ENCODE measurements at regions of chr5 and their contacts with region 1.

Region 1: GRCh38 chr5:127770272-127770671 is 67.1 kb downstream of the CCDC192 start:
- DNase-seq: no peak
- H3K4me3 Mint-ChIP-seq: no peak overlapping the region
- H3K27ac Mint-ChIP-seq: no peak overlapping the region
- H3K4me1 Mint-ChIP-seq: no peaks in the 10 kb centered on the region
- H3K27me3 Mint-ChIP-seq: peaks cover 25% of the 10 kb centered on the region
- CTCF ChIP-seq: no peak

Region 2: DNA sequence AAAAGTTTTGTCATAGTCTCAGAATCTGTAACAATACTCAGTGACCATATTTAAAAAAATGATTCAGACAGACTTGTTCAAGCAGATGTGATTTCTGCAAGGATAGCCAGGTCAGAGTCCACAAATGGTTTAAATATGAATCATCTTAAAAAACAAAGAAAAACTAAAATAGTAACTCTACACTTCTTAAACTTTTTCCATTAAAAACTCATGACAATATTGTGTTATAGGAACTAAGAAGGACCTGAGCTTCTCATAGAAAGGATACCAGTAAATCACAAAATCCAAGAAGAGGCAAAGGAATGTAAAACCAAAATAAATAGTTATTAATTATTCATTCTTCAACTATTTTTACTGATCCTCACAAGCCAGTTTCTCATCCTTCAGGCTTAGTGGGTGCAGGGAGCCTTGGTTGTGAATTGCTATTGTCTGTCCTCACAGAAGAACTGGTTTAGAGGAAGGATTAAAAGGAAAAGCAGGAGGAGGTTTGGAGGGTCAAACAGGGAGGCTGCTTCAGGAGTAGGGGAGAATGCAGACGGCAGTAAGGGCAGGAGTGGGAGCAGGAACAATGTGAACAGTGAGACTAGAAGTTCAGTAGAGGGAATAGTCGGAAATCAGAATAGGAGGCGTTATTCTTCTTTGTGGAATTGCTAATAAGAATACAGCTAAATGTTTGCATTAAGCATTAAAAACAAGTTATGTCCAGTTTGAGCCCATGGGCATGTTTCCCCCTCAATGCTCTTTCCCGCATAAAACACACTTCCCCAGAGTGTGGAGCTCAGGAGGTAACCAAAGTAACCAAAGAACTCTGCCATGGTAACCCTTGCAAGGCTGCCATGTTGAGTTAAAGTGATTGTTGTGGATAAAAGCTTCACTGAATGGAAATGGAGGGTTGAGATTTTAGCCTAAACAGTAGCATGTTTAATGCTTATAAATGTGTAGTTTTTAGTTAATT is 43.6 kb after region 1 on chr5:
- CTCF ChIA-PET with region 1: no interaction called
- POLR2A ChIA-PET with region 1: interaction called, 5 read pairs
- intact Hi-C with region 1: loop called (anchors 5 kb)
- DNase-seq: peak; percentile 66
- H3K4me3 Mint-ChIP-seq: peak overlapping the region; percentile 1
- H3K27ac Mint-ChIP-seq: peak overlapping the region; percentile 32
- H3K4me1 Mint-ChIP-seq: peaks cover 17% of the 10 kb centered on the region
- H3K27me3 Mint-ChIP-seq: no peaks in the 10 kb centered on the region
- CTCF ChIP-seq: no peak